ENCODE measurements at regions of chr13 and their contacts with region 1.

Region 1: DNA sequence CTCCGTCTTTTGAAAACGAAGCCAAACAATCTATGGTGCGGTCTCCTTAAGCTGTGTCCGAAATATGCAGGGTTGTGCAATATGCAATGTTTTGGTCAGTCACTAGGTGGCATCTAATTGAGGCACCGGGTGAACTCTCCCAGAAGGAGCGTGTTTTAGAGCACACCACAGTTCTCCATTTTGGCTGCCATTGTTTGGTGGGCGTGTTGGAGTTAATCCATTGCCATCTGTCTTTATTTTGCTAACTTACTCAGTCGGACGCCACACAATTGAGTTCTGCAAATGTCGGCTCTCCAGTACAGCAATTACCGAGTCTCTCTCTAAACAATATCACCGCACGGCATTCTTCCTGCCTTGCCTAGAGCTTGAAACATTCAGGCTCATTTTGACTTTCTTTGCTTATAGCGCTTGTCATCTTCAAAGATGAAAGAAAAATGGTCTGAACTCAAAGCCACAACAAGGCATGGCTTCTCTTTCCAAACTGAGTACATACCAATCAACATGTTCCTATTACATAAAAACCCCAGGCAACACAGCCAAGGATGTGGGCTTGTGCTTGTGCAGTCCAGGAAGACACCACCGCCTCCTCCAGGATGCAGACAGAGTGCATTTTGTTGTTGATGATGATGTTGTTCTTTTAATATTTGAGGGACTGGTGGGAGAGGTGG is 182.0 kb upstream of the SERP2 start:
- DNase-seq: peak in 7 of 9 donors; percentile 63 to 81 (median 72)
- ATAC-seq: peak; percentile 88
- H3K4me3 ChIP-seq: peak overlapping the region; percentile 0
- H3K4me3 Mint-ChIP-seq: peak overlapping the region; percentile 6 to 71 (median 59)
- H3K27ac ChIP-seq: no peak overlapping the region
- H3K27ac Mint-ChIP-seq: peak overlapping the region in 8 of 9 donors; percentile 75 to 97 (median 86)
- H3K4me1 ChIP-seq: peaks cover 0 to 6% of the 10 kb centered on the region in 2 donors
- H3K4me1 Mint-ChIP-seq: peaks cover 16 to 39% (median 35%) of the 10 kb centered on the region in 7 donors
- H3K27me3 ChIP-seq: no peaks in the 10 kb centered on the region
- H3K27me3 Mint-ChIP-seq: peaks cover 0 to 44% (median 0%) of the 10 kb centered on the region in 5 donors

Region 2: GRCh38 chr13:44050450-44051063 is 141.1 kb before region 1 on chr13:
- CTCF ChIA-PET with region 1: no interaction called
- POLR2A ChIA-PET with region 1: no interaction called
- intact Hi-C with region 1: loop called in 1 of 2 experiments (anchors 1 kb)
- DNase-seq: peak in 5 of 9 donors; percentile 25 to 50 (median 34)
- ATAC-seq: no peak
- H3K4me3 ChIP-seq: no peak overlapping the region
- H3K4me3 Mint-ChIP-seq: no peak overlapping the region
- H3K27ac ChIP-seq: no peak overlapping the region
- H3K27ac Mint-ChIP-seq: no peak overlapping the region
- H3K4me1 ChIP-seq: no peaks in the 10 kb centered on the region
- H3K4me1 Mint-ChIP-seq: peaks cover 0 to 4% (median 2%) of the 10 kb centered on the region in 7 donors
- H3K27me3 ChIP-seq: no peaks in the 10 kb centered on the region
- H3K27me3 Mint-ChIP-seq: peaks cover 32 to 53% (median 44%) of the 10 kb centered on the region in 5 donors

Region 3: GRCh38 chr13:44259045-44260027 is 67.7 kb after region 1 on chr13:
- CTCF ChIA-PET with region 1: no interaction called
- POLR2A ChIA-PET with region 1: no interaction called
- intact Hi-C with region 1: loop called in 1 of 2 experiments (anchors 5 kb)
- DNase-seq: peak in 8 of 9 donors; percentile 17 to 77 (median 35)
- ATAC-seq: peak; percentile 87
- H3K4me3 ChIP-seq: peak overlapping the region; percentile 2
- H3K4me3 Mint-ChIP-seq: peak overlapping the region; percentile 40 to 87 (median 66)
- H3K27ac ChIP-seq: no peak overlapping the region
- H3K27ac Mint-ChIP-seq: peak overlapping the region; percentile 68 to 94 (median 88)
- H3K4me1 ChIP-seq: peaks cover 7 to 10% of the 10 kb centered on the region in 2 donors
- H3K4me1 Mint-ChIP-seq: peaks cover 9 to 24% (median 19%) of the 10 kb centered on the region in 7 donors
- H3K27me3 ChIP-seq: no peaks in the 10 kb centered on the region
- H3K27me3 Mint-ChIP-seq: peaks cover 0 to 6% (median 0%) of the 10 kb centered on the region in 5 donors

Region 4: GRCh38 chr13:44435142-44435982 is 243.7 kb after region 1 on chr13:
- CTCF ChIA-PET with region 1: interaction called, 30 read pairs
- POLR2A ChIA-PET with region 1: interaction called, 5 read pairs
- intact Hi-C with region 1: loop called (anchors 1 kb)
- DNase-seq: peak; percentile 58 to 94 (median 78)
- ATAC-seq: peak; percentile 91
- H3K4me3 ChIP-seq: peak overlapping the region; percentile 65
- H3K4me3 Mint-ChIP-seq: peak overlapping the region; percentile 85 to 94 (median 90)
- H3K27ac ChIP-seq: peak overlapping the region; percentile 75
- H3K27ac Mint-ChIP-seq: peak overlapping the region; percentile 21 to 93 (median 83)
- H3K4me1 ChIP-seq: peaks cover 13 to 14% of the 10 kb centered on the region in 2 donors
- H3K4me1 Mint-ChIP-seq: peaks cover 14 to 34% (median 27%) of the 10 kb centered on the region in 7 donors
- H3K27me3 ChIP-seq: peaks cover 0 to 3% of the 10 kb centered on the region in 2 donors
- H3K27me3 Mint-ChIP-seq: peaks cover 6 to 73% (median 9%) of the 10 kb centered on the region in 5 donors

Region 5: DNA sequence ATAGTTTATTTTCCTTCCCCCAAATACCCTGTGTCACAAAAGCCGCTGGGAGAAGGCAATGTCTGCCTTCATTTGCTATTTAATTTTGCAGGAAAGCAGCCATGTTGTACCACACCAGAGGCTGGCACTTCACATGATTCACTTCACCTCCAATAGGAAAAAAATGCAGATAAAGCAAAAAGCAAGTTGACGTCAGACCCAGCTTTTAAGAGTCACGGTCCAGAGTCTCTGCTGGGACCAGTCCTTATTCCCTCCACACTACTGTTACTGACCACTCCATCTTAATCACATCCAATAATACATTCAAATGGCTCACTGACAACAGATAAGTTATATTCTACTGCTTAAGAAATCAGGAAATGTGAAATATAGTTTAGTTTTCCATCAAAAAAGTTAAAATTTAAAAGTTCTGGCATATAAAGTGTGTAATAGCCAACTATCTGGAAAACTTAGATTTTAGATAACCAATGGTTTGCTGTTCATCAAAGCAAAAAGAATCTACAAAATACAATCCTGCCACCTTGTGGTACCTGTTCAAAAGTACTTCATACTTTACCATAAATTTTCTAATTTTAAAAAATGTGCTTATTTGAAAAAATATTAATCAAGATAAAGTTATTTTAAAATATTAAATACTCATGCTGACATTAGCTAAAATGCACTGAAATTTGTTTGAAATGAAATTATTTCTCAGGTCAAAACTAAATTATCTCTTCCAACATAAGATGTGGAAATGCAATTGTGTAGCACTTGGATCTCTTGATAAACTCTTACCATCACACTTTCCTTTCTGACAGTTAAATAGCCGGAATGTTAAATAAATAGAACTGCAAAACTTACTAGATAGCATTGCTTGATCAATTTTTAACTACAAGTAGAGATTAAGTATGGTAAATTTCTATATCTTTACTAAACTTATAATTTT is 279.3 kb after region 1 on chr13:
- CTCF ChIA-PET with region 1: interaction called, 4 read pairs
- POLR2A ChIA-PET with region 1: no interaction called
- intact Hi-C with region 1: loop called in 1 of 2 experiments (anchors 1 kb)
- DNase-seq: peak in 5 of 9 donors; percentile 10 to 29 (median 21)
- ATAC-seq: no peak
- H3K4me3 ChIP-seq: no peak overlapping the region
- H3K4me3 Mint-ChIP-seq: no peak overlapping the region
- H3K27ac ChIP-seq: no peak overlapping the region
- H3K27ac Mint-ChIP-seq: no peak overlapping the region
- H3K4me1 ChIP-seq: no peaks in the 10 kb centered on the region
- H3K4me1 Mint-ChIP-seq: peaks cover 0 to 5% (median 0%) of the 10 kb centered on the region in 7 donors
- H3K27me3 ChIP-seq: no peaks in the 10 kb centered on the region
- H3K27me3 Mint-ChIP-seq: peaks cover 0 to 23% (median 0%) of the 10 kb centered on the region in 5 donors

Measured in naive thymus-derived CD4-positive, alpha-beta T cell (primary cell).